B cell (primary cell): ENCODE measurements at regions of chr14 and their contacts with region 1.

Region 1: DNA sequence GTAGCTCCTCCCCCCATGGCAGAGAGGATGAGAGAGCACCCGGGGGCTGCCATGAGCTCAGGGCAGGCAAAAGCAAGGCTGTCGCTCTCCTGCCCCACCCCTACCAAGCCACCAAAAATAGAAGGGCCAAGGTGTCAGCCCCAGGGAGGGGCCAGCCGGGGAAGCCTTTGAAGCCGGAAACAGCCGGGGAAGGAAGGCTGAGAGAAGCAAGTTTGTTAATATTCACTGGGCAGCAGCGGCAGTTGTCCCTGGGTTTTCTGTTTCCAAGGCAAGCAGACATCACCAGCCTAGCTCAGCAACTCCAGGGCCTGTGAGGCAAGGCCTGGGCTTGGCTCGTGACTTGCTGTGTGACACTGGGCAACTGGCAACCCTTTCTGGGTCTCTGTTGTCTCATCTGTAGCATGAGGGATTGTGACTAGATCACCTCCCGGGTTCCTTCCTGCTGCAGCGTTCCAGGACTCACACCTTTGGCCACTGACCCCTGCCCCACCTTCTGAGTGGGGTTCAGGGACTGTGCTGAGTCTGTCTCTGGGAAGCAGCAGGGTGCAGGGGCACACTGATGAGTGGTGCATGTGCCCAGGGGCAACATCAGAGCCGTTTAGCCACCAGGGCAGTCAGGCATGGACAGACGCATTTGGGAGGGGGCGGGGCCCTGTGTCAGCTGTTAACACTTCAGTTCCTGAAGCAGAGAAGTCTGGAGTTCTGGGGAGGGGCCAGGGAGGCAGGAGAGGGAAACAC is 24.3 kb downstream of the SYNDIG1L start:
- DNase-seq: peak; percentile 92
- ATAC-seq: peak; percentile 89
- H3K4me3 ChIP-seq: peak overlapping the region in 4 of 5 experiments; percentile 50 to 67 (median 60)
- H3K4me3 Mint-ChIP-seq: peak overlapping the region; percentile 97
- H3K27ac ChIP-seq: peak overlapping the region; percentile 92 to 94
- H3K27ac Mint-ChIP-seq: peak overlapping the region; percentile 100
- H3K4me1 ChIP-seq: peaks cover 33 to 48% of the 10 kb centered on the region in 2 donors
- H3K4me1 Mint-ChIP-seq: peaks cover 61% of the 10 kb centered on the region
- H3K27me3 ChIP-seq: no peaks in the 10 kb centered on the region
- H3K27me3 Mint-ChIP-seq: no peaks in the 10 kb centered on the region
- CTCF ChIP-seq: no peak

Region 2: DNA sequence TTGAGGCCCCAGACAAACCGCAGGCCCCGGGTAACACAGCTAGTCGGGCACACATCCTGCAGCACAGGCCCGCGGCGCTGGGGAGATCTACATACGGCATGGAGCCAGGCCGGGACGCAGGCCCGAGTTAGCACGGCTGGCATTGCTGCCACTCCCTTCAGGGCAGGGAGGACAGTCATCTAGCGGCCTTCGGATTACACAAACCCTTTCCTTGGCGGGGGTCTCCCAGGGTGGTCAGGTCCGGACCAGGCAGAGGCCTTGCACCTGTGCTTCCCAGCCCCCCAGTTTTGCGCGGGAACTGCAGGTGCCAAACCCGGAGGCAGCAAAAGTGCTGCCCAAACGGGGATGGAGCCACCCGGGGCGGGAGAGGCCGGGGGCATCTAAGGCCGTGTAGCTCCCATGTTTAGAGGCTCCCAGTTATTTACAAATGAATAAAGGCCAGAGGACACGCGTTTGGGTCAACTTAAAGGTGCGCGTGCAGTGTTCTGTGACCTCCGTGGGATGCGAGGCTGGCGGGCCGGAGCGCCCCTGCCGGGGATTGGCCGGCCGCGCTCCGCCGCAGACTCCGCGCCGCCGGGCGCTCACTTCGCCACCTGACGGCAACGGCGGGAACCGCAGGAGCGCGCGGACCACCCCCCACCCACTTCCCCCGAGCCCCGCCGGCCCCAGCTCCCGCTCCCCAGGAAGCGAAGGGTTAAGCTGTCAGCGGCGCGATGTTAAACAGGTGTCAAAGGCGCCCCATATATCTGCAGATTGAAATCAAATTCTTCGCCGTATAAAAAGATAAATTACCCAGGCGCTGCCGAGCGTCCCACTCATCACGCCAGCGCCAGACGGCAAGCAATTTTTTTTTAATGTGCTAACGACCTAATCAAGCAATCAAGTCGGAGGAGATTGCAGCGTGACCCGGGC is 144.3 kb before region 1 on chr14:
- CTCF ChIA-PET with region 1: no interaction called
- POLR2A ChIA-PET with region 1: no interaction called
- intact Hi-C with region 1: loop called (anchors 5 kb)
- DNase-seq: peak; percentile 80
- ATAC-seq: peak; percentile 97
- H3K4me3 ChIP-seq: peak overlapping the region; percentile 38 to 72 (median 61)
- H3K4me3 Mint-ChIP-seq: peak overlapping the region; percentile 83
- H3K27ac ChIP-seq: no peak overlapping the region
- H3K27ac Mint-ChIP-seq: no peak overlapping the region
- H3K4me1 ChIP-seq: peaks cover 17% of the 10 kb centered on the region in 2 donors
- H3K4me1 Mint-ChIP-seq: peaks cover 6% of the 10 kb centered on the region
- H3K27me3 ChIP-seq: peaks cover 0 to 23% (median 8%) of the 10 kb centered on the region in 4 experiments
- H3K27me3 Mint-ChIP-seq: peaks cover 13% of the 10 kb centered on the region
- CTCF ChIP-seq: peak; percentile 100

Region 3: GRCh38 chr14:74362361-74362915 is 39.2 kb before region 1 on chr14:
- CTCF ChIA-PET with region 1: interaction called, 17 read pairs
- POLR2A ChIA-PET with region 1: no interaction called
- intact Hi-C with region 1: loop called (anchors 2 kb)
- DNase-seq: peak; percentile 79
- ATAC-seq: peak; percentile 88
- H3K4me3 ChIP-seq: no peak overlapping the region
- H3K4me3 Mint-ChIP-seq: no peak overlapping the region
- H3K27ac ChIP-seq: no peak overlapping the region
- H3K27ac Mint-ChIP-seq: no peak overlapping the region
- H3K4me1 ChIP-seq: peaks cover 4 to 5% of the 10 kb centered on the region in 2 donors
- H3K4me1 Mint-ChIP-seq: no peaks in the 10 kb centered on the region
- H3K27me3 ChIP-seq: peaks cover 0 to 3% (median 0%) of the 10 kb centered on the region in 4 experiments
- H3K27me3 Mint-ChIP-seq: peaks cover 6% of the 10 kb centered on the region
- CTCF ChIP-seq: peak; percentile 99

Region 4: DNA sequence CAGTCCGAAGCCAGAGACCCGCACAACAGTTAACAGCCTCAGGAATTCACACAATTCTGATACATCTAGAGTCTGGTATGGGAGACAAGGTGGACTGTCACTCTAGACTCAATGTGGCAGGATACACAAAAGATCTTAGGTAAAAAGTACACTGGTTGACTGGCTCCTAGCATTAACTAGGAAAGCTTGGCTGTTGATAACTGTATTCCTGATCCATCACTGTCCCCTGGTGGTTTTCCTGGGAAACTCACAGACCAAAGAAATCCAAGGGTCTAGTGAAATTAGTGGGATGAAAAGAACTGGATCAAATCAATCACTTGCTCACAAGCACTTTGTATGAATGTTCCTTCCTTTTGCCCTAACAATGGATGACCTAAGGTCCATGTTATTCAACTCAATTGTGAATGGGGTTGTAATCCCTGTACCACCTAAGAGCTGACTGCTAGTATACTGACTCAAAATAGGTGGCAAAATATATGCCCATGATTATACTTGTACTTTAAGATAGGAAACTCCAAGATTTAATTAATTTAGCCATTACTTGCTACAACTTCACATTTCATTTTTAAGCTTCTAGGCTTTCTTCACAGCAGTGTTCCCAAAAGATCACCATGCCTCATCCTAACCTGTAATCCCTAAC is 77.4 kb after region 1 on chr14:
- CTCF ChIA-PET with region 1: interaction called, 13 read pairs
- POLR2A ChIA-PET with region 1: no interaction called
- intact Hi-C with region 1: no loop called
- DNase-seq: peak; percentile 36
- ATAC-seq: no peak
- H3K4me3 ChIP-seq: no peak overlapping the region
- H3K4me3 Mint-ChIP-seq: no peak overlapping the region
- H3K27ac ChIP-seq: no peak overlapping the region
- H3K27ac Mint-ChIP-seq: no peak overlapping the region
- H3K4me1 ChIP-seq: no peaks in the 10 kb centered on the region
- H3K4me1 Mint-ChIP-seq: no peaks in the 10 kb centered on the region
- H3K27me3 ChIP-seq: no peaks in the 10 kb centered on the region
- H3K27me3 Mint-ChIP-seq: no peaks in the 10 kb centered on the region
- CTCF ChIP-seq: peak; percentile 68

Region 5: DNA sequence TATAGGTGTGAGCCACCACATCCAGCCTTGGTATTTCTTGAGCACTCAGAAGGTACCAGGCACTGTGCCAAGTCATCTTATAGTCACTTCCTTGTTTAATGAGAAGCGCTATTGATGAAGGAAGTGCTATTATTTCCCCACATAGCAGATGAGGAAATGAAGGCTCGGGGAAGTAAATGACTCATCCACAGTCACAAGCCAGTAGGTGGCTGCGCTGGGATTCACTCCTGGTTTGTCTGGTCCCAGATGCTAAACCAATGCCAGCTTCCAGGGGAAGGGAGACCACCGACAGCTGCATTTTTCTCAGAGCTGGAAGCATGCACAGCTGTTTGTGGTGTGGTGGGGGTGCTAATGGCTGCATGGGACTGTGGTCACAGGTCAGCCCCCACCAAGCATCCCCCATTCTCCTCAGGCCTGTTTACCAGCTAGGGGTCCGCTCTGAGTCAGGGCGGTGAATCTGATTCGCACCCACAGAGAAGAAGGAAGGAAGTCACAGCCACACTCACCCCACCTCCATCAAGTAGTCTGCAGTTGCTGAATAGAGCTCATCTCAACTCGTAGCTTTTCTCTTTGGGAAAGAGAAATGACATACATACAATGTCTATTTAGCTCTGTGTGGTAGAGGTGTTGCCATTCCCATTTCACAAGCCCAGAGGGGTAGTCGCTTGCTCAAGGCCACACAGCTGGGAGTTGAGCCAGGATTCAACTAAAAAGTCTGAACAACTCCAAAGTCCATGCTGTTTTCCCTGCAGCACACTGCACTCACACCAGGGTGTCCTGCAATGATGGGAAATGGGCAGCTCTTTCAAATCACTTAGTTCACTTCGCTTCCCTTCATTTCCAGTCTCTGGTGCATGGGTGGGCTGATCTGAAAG is 216.6 kb after region 1 on chr14:
- CTCF ChIA-PET with region 1: no interaction called
- POLR2A ChIA-PET with region 1: no interaction called
- intact Hi-C with region 1: loop called (anchors 2 kb)
- DNase-seq: peak; percentile 82
- ATAC-seq: peak; percentile 74
- H3K4me3 ChIP-seq: peak overlapping the region in 4 of 5 experiments; percentile 34 to 64 (median 44)
- H3K4me3 Mint-ChIP-seq: peak overlapping the region; percentile 73
- H3K27ac ChIP-seq: peak overlapping the region; percentile 77 to 79
- H3K27ac Mint-ChIP-seq: peak overlapping the region; percentile 76
- H3K4me1 ChIP-seq: peaks cover 36 to 39% of the 10 kb centered on the region in 2 donors
- H3K4me1 Mint-ChIP-seq: peaks cover 55% of the 10 kb centered on the region
- H3K27me3 ChIP-seq: peaks cover 0 to 6% (median 0%) of the 10 kb centered on the region in 4 experiments
- H3K27me3 Mint-ChIP-seq: peaks cover 13% of the 10 kb centered on the region
- CTCF ChIP-seq: no peak